ENCODE measurements at regions of chr19 and their contacts with region 1.

Region 1: DNA sequence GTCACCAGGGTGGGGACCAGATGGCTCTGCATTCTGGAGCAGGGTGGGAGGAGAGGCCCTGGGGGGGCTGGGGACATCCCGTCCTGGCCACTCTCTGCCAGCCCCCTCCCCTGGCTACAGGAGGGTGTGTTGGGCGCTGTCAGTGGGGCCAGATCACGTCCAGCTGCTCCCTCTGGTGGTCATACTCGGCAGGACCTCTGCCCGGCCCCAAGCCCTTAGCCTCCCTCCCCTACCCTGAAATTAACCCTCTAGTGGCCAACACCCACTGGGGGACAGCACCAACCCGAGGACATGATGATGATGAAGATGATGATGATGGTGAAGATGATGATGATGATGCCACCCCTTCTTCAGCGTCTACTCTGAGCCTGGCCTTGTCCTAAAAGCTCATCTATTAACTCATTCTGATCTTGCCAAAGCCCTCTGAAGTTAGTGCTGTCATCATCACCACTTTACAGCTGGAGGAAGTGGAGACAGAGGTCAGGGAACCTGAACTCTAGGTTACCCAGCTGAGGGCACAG is 590 bp upstream of the LGI4 start:
- DNase-seq: peak in 1 of 2 donors; percentile 88
- H3K4me3 ChIP-seq: peak overlapping the region; percentile 18 to 63
- H3K27ac ChIP-seq: peak overlapping the region; percentile 17 to 69
- H3K4me1 ChIP-seq: peaks cover 12 to 24% of the 10 kb centered on the region in 2 donors
- H3K27me3 ChIP-seq: no peaks in the 10 kb centered on the region
- CTCF ChIP-seq: peak; percentile 90 to 95 (median 92)

Region 2: GRCh38 chr19:35066691-35067563 is 68.5 kb before region 1 on chr19:
- intact Hi-C with region 1: loop called (anchors 1 kb)
- DNase-seq: peak; percentile 39 to 88
- H3K4me3 ChIP-seq: no peak overlapping the region
- H3K27ac ChIP-seq: no peak overlapping the region
- H3K4me1 ChIP-seq: no peaks in the 10 kb centered on the region
- H3K27me3 ChIP-seq: no peaks in the 10 kb centered on the region
- CTCF ChIP-seq: peak; percentile 75 to 84 (median 80)

Region 3: GRCh38 chr19:35114353-35115176 is 20.9 kb before region 1 on chr19:
- intact Hi-C with region 1: loop called (anchors 1 kb)
- DNase-seq: peak in 1 of 2 donors; percentile 80
- H3K4me3 ChIP-seq: peak overlapping the region; percentile 10 to 55
- H3K27ac ChIP-seq: no peak overlapping the region
- H3K4me1 ChIP-seq: peaks cover 4 to 6% of the 10 kb centered on the region in 2 donors
- H3K27me3 ChIP-seq: no peaks in the 10 kb centered on the region
- CTCF ChIP-seq: peak; percentile 93 to 99 (median 98)

Region 4: GRCh38 chr19:35124098-35125060 is 11.1 kb before region 1 on chr19:
- intact Hi-C with region 1: loop called (anchors 1 kb)
- DNase-seq: peak; percentile 80 to 96
- H3K4me3 ChIP-seq: peak overlapping the region; percentile 56 to 64
- H3K27ac ChIP-seq: peak overlapping the region; percentile 80 to 85
- H3K4me1 ChIP-seq: peaks cover 8 to 13% of the 10 kb centered on the region in 2 donors
- H3K27me3 ChIP-seq: no peaks in the 10 kb centered on the region
- CTCF ChIP-seq: no peak

Region 5: DNA sequence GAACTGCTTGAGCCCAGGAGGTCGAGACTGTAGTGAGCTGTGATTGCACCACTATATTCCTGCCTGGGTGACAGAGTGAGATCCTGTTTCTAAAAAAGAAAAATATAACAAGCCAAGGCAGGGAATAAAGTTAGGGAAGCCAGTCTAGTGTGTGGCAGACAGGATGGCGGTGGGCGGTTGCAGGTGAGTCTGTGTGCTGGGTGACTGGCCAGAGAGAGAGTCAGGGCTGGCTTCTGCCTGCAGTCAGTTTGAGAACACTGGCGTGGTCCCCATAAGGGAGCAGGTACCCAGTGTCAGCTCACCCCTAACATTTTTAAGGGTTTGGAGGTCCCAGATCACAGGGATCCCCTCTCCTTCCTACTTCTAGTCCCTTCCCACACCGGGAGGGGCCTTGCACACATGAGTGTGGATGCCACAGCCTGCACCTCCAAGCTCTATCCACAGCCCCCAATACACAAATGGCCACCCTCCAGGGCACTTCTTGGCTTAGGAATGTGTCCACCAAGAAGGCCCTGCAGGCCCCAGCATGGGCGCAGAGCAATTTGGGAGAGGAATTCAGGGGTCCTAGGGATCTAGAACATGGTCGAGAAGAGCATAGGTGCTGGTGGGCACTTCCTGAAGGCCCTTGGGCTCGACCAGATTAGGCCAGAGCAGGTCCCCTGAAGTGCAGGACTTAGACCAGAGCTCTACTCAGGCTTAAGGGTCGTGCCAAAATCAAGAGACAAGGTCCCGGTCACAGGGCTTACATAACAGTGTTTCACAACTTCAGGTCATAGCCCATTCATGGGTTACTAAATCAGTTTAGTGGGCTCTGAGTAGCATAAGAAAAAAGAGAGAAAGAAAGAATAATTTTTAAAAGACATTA is 34.9 kb after region 1 on chr19:
- intact Hi-C with region 1: no loop called
- DNase-seq: no peak
- H3K4me3 ChIP-seq: no peak overlapping the region
- H3K27ac ChIP-seq: no peak overlapping the region
- H3K4me1 ChIP-seq: no peaks in the 10 kb centered on the region
- H3K27me3 ChIP-seq: no peaks in the 10 kb centered on the region
- CTCF ChIP-seq: no peak

Region 6: GRCh38 chr19:35501684-35502083 is 366.2 kb after region 1 on chr19:
- intact Hi-C with region 1: no loop called
- DNase-seq: no peak
- H3K4me3 ChIP-seq: no peak overlapping the region
- H3K27ac ChIP-seq: no peak overlapping the region
- H3K4me1 ChIP-seq: no peaks in the 10 kb centered on the region
- H3K27me3 ChIP-seq: no peaks in the 10 kb centered on the region
- CTCF ChIP-seq: no peak

Measured in ascending aorta (tissue), 2 donors.